ENCODE measurements at regions of chr13 and their contacts with region 1.

Region 1: DNA sequence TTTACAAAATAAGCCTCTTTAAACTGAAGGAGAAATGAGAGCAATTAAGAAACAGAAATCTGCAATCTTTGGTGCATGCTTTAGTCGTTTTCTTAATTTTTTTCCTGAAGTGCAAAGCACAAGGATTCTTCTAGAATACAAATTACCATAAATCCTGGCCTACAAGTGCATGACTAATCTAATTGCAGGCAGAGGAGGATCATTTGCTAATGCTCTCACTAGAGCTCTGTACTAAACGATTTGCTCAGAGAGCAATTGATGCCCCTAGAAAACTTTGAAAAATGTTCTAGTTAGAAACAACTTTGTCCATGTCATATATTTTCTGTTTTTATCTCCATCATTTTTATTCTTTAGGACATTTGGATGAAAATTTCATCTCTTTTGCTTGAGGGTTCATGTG is 193.2 kb downstream of the POU4F1 start:
- DNase-seq: no peak
- H3K4me3 ChIP-seq: no peak overlapping the region
- H3K27ac ChIP-seq: no peak overlapping the region
- H3K27me3 ChIP-seq: no peaks in the 10 kb centered on the region
- CTCF ChIP-seq: no peak

Region 2: GRCh38 chr13:78426183-78426582 is 16.0 kb after region 1 on chr13:
- intact Hi-C with region 1: loop called in 1 of 2 experiments (anchors 1 kb)
- DNase-seq: no peak
- H3K4me3 ChIP-seq: no peak overlapping the region
- H3K27ac ChIP-seq: no peak overlapping the region
- H3K27me3 ChIP-seq: no peaks in the 10 kb centered on the region
- CTCF ChIP-seq: no peak

Measured in dorsolateral prefrontal cortex (tissue), 120 donors.